ENCODE measurements at regions of chr5 and their contacts with region 1.

Region 1: DNA sequence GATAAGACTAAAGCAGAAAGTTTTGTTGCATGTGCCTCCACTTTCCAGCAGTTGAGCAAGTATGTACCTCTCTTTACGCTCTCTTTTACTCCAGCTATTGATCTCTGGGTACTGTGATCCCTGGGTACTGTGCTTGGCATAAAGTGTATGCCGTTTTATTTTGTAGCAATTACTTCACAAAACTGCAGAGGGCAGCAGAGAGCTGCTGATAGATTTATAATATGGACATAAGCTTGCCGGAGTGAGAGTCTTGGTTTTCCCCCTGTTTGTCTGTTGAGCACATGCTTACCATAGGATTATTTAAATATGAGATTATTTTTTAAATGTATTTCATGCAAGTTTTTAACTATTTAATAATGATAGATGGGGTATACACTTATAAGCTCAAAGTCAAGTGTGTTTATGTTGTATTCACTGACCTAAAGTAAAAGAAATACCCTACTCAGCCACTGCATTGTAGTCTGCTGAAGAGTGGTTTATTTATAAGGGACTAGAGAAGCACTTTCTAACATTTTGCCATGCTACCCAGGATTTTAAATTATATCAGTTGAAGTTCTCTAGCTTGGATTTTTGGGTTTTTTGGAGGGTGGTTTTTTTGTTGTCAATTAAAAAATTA is 13.0 kb downstream of the TTC1 start:
- DNase-seq: peak; percentile 31
- ATAC-seq: peak; percentile 92
- H3K4me3 Mint-ChIP-seq: no peak overlapping the region
- H3K27ac Mint-ChIP-seq: no peak overlapping the region
- H3K4me1 Mint-ChIP-seq: peaks cover 6% of the 10 kb centered on the region
- H3K27me3 Mint-ChIP-seq: no peaks in the 10 kb centered on the region
- CTCF ChIP-seq: peak; percentile 74

Region 2: DNA sequence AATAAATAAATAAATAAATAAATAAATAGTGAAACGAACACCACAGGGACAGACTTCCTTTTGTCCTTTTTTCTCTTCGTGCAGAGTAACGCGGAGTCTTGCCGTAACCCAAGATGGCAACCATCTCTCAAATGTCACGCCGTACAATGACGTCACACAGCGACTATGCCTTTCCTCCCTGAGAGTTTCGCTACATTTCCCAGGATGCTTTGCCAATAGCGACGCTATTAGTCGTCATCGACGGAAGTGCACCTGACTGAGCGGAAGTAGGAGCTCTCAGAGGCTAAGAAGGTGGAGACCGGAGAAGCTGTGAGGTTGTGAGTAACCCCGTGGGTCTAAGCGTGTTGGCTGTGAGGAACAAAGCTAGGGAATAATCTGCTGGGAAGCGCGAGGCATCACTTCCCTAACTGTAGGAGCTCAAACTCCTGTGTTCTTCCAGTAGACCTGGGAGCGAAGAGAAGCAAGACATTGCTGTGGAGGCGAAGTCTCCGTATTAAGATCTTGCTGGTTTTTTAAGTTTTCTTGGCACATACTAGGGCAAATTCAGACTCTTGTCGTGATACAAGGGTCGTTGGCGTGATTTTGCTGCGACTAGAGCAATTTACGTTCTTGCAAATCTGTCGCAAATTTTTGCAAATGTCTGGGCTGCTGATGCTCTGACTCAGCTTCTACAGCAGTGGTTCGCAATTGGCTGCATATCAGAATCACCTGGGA is 12.9 kb before region 1 on chr5 and contains the start of gene TTC1:
- CTCF ChIA-PET with region 1: interaction called, 31 read pairs
- POLR2A ChIA-PET with region 1: no interaction called
- DNase-seq: peak; percentile 90
- ATAC-seq: peak; percentile 95
- H3K4me3 Mint-ChIP-seq: peak within 1 kb of the TSS; percentile 100
- H3K27ac Mint-ChIP-seq: peak within 1 kb of the TSS; percentile 99
- H3K4me1 Mint-ChIP-seq: peaks cover 12% of the 10 kb centered on the region
- H3K27me3 Mint-ChIP-seq: no peaks in the 10 kb centered on the region
- CTCF ChIP-seq: no peak
- total RNA-seq, gene TTC1: 46.4 to 48.3 TPM (median 47.4 TPM) in 3 replicates

Region 3: DNA sequence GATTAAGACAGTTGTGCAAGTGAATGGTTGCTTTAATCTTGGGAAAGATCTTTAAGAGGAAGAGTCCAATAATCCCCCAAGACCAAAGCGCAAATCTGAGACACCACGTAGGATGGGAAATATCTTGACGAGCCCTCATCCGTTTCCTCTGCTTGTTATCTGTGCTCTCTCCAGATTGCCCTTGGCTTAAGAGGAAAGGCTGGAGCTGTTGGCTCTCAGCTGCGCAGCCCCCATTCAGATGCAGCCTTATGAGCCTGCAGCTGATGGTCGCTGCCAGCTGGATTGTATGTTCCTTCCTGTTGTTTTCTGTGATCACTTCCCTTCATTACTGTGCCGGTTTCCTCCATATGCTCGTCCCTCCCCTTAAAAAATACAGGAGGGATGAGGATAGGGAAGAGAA is 49.6 kb after region 1 on chr5:
- CTCF ChIA-PET with region 1: interaction called, 22 read pairs
- POLR2A ChIA-PET with region 1: no interaction called
- DNase-seq: no peak
- ATAC-seq: no peak
- H3K4me3 Mint-ChIP-seq: no peak overlapping the region
- H3K27ac Mint-ChIP-seq: peak overlapping the region; percentile 85
- H3K4me1 Mint-ChIP-seq: peaks cover 14% of the 10 kb centered on the region
- H3K27me3 Mint-ChIP-seq: no peaks in the 10 kb centered on the region
- CTCF ChIP-seq: no peak

Region 4: DNA sequence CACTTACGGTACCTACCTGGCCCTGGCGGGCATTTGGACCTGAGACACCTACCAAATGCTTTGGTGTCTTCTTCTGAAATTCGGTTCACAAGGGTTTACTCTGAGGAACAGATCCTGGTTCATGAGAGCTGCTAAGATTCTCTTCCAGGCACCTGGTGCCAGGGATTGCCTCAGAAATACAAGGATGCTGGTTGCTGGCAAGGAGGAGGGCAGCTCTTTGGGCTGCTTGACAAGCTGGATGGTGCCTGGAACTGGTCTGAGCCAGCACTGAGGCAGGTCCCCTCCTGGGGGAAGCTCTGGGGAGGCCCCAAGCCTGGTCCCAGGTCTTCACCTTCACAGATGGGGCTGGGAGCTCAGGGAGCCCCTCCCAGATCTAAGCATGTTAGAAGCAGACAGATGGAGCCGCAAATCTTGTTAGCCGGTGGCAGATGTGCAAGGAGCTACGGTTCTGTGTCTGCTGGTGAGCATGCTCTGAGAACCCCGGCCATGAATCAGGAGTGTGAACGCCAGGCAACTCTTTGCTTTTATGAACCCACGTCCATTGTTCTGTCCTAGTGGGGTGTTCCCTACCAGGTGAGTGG is 223.7 kb after region 1 on chr5:
- CTCF ChIA-PET with region 1: interaction called, 10 read pairs
- POLR2A ChIA-PET with region 1: no interaction called
- DNase-seq: no peak
- ATAC-seq: 0 out of 2 replicates have a peak, but pooled peaks have one; percentile 8
- H3K4me3 Mint-ChIP-seq: no peak overlapping the region
- H3K27ac Mint-ChIP-seq: no peak overlapping the region
- H3K4me1 Mint-ChIP-seq: peaks cover 11% of the 10 kb centered on the region
- H3K27me3 Mint-ChIP-seq: no peaks in the 10 kb centered on the region
- CTCF ChIP-seq: no peak

Region 5: DNA sequence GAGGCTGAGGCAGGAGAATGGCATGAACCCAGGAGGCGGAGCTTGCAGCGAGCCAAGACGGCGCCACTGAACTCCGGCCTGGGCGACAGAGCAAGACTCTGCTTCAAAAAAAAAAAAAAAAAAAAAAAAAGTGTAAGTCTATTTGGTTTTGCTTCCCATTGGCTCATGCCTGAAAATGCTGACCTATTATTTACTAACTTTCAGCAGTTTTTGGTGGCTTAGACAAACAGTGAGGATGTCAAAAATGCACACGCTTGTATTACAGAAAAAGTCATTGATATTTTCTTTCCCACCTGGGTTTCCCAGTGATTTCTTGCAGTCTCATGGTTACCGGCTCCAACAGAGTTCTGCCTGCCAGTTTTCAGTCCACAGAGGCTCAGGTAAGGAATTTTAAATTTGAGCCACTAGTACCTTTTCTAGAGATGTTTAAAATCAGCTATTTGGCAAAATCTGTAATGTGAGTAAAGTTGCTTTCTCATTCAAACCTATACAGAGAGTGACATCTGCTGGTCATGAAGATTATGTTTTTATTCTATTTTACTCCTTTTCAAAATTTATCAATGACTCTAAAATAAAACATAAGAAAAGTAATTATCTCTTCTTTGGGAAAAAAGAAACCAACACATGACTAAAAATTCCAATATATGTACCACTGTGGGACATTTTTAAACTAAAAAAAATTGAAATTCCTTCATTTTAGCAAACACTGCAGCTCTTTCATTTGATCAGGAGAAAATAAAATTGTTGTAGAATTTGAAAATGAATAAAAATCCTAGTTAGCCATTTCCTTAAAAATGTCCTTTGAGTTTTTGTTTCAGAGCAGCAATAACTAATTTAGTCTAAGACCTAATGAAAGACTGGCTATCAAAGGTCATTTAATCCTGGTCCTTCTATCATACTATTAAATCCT is 369.1 kb after region 1 on chr5:
- CTCF ChIA-PET with region 1: interaction called, 11 read pairs
- POLR2A ChIA-PET with region 1: no interaction called
- DNase-seq: no peak
- ATAC-seq: no peak
- H3K4me3 Mint-ChIP-seq: no peak overlapping the region
- H3K27ac Mint-ChIP-seq: 0 out of 2 replicates have a peak overlapping the region, but pooled peaks have one; percentile 36
- H3K4me1 Mint-ChIP-seq: no peaks in the 10 kb centered on the region
- H3K27me3 Mint-ChIP-seq: peaks cover 9% of the 10 kb centered on the region
- CTCF ChIP-seq: no peak

Measured in WTC11 (cell line).